Activated CD4-positive, alpha-beta T cell treated with anti-CD3 and anti-CD28 coated beads for 36 hours (primary cell): ENCODE measurements at regions of chr14 and their contacts with region 1.

Region 1: DNA sequence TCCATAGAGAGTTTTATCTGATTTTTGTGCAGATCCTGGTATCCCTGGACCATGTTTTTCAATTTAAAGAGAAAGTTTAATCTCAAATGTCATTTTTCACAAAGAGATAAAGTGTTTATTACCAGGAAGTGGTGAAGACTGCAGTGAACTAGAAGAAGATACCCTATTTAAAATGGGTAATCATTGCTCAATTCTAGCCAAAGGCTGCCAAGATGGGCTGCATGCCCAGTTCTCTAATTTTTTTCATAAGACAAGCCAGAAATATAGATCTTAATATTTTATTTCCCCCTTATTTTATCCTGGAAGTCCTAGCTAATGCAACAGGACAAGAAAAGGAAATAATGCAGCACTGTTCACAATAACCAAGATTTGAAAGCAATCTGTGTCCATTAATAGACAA is 343.5 kb downstream of the PCNX1 start:
- DNase-seq: no peak
- ATAC-seq: no peak
- H3K4me3 Mint-ChIP-seq: no peak overlapping the region
- H3K27ac Mint-ChIP-seq: no peak overlapping the region
- H3K4me1 Mint-ChIP-seq: peaks cover 13% of the 10 kb centered on the region
- H3K27me3 Mint-ChIP-seq: peaks cover under 1% of the 10 kb centered on the region

Region 2: DNA sequence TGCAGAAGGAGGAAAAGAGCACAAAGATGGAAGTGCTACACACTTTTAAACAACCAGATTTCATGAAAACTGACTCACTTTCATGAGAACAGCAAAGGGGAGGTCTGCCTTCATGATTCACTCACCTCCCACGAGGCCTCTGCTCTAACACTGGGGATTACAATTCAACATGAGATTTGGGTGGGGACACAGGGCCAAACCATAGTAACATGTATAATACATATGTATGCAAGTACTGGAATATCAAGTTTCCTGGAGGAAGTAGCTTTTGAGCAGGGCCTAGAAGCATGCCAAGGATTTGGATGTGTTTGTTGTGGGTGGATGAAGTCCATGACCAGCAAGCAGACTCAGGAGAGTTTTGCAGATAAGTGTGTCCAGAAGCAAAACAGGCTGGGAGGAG is 1090.4 kb after region 1 on chr14:
- CTCF ChIA-PET with region 1: no interaction called
- POLR2A ChIA-PET with region 1: no interaction called
- intact Hi-C with region 1: loop called in 1 of 2 experiments (anchors 5 kb)
- DNase-seq: no peak
- ATAC-seq: no peak
- H3K4me3 Mint-ChIP-seq: no peak overlapping the region
- H3K27ac Mint-ChIP-seq: no peak overlapping the region
- H3K4me1 Mint-ChIP-seq: peaks cover 4% of the 10 kb centered on the region
- H3K27me3 Mint-ChIP-seq: peaks cover 2% of the 10 kb centered on the region